ENCODE measurements at regions of chr20 and their contacts with region 1.

Region 1: DNA sequence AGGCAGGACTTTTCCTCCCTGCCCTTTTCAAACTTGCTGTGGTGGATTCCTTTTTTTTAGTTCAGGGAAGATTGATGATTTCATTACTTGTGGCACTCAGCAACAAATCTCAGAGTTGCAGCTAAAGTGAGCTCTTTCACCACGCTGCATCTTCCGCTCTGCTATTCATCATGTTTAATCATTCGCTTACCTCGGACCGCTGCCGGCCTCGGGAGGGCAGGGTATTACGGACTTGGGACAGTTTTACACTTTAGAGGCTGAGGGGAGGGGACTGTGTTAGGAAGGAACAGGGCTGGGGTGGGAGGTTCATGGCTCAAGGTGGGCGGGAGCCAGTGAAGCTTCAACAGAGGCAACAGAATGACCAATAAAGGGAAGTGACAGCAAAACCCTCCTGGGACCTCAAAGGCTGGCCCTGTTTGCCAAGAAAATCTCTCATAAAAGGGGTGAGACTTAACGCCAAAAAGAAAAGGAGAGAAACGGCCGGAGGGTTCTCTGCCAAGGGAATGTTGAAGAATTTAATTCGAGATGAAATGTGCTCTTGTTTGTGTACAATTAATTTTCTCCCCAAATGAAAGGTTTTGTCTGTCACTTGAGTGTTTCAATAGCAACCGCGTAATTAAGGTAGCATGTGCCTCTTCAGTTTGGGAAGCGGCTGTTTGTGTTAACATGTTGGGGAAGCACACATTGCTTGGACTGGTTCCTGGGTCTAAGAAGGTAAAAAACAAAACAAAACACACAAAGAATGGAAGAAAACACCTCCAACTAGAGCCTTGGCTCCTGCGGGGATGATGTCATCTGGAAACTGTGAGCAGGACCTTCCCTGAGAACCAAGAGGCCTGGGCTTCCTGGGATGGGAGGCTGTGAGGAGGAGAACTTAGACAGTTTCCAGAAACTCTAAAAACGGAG is 72.5 kb upstream of the SULF2 start:
- DNase-seq: peak; percentile 70 to 76
- H3K4me3 ChIP-seq: peak overlapping the region; percentile 46
- H3K27ac ChIP-seq: peak overlapping the region; percentile 99
- H3K4me1 ChIP-seq: peaks cover 56% of the 10 kb centered on the region
- H3K27me3 ChIP-seq: no peaks in the 10 kb centered on the region
- CTCF ChIP-seq: 0 out of 2 replicates have a peak, but pooled peaks have one; percentile 14

Region 2: DNA sequence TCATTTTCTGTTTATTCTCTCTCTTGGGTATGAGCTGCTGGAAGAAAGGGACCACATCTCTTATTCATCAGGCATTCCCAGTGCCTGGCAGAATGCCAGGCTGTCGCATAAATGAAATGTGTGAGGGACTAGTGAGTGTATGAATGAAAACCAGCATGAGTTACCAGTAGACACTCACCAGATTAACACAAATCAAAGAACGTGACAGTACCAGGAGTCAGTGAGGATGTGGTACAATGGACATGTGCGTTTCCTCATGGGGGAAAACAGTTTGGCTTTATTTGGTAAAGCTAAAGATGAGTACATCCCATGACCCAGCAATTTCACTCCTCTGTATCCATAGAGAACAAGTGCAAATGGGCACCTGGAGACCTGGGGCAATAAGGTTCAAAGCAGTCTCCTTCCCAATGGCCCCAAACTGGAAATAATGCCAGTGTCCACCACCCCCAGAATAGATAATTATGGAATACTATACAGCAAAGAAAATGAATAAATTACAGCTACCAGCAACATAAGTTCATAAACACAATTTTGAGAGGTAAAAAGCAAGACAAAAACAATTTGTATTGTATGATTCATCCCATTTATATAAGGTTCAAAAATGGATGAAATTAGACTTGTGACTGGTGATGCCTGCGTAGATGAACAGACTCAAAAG is 1642.9 kb before region 1 on chr20:
- CTCF ChIA-PET with region 1: no interaction called
- POLR2A ChIA-PET with region 1: no interaction called
- intact Hi-C with region 1: no loop called
- DNase-seq: no peak
- H3K4me3 ChIP-seq: no peak overlapping the region
- H3K27ac ChIP-seq: no peak overlapping the region
- H3K4me1 ChIP-seq: peaks cover 11% of the 10 kb centered on the region
- H3K27me3 ChIP-seq: peaks cover 46% of the 10 kb centered on the region
- CTCF ChIP-seq: no peak

Region 3: DNA sequence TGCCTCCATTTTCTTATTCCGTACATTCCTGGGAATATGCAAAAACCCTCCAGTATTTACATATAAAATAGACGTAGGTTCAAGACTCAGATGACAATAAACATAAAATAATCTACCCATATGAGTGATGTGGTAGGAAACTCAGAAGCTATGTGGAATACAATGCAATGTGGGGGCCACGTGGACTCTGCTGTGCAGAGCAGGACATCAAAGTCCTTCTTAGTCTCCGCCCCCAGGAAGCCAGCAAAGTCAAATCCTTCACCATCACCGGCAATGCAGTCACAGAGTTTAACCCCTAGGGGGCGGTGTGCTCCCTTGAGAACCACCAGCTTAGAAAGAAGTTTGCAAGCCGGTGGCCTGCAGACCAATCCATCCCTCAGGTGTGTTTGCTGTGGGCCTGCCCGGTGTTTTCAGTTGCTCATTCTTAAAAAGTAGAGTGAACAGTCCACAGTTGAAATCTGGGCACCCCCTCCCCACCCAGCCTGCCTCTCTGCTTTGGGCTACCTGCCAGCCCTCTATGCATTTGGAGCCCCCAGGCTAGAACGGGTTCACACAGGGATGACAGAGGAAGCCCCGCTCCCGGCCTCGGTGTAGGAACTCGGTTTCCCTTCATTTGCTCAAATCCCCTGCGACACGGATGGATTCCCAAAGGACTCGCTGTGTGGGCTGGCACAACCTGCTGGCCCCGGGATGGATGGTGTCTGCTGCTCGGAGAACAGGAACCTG is 132.4 kb before region 1 on chr20:
- CTCF ChIA-PET with region 1: no interaction called
- POLR2A ChIA-PET with region 1: no interaction called
- intact Hi-C with region 1: loop called (anchors 5 kb)
- DNase-seq: peak; percentile 84 to 86
- H3K4me3 ChIP-seq: no peak overlapping the region
- H3K27ac ChIP-seq: no peak overlapping the region
- H3K4me1 ChIP-seq: 0 out of 2 replicates have a peak, but pooled peaks cover 4% of the 10 kb centered on the region
- H3K27me3 ChIP-seq: no peaks in the 10 kb centered on the region
- CTCF ChIP-seq: peak; percentile 99

Region 4: GRCh38 chr20:47818996-47819609 is 38.7 kb before region 1 on chr20:
- CTCF ChIA-PET with region 1: interaction called, 3 read pairs
- POLR2A ChIA-PET with region 1: no interaction called
- intact Hi-C with region 1: loop called (anchors 5 kb)
- DNase-seq: no peak
- H3K4me3 ChIP-seq: no peak overlapping the region
- H3K27ac ChIP-seq: peak overlapping the region; percentile 88
- H3K4me1 ChIP-seq: peaks cover 76% of the 10 kb centered on the region
- H3K27me3 ChIP-seq: no peaks in the 10 kb centered on the region
- CTCF ChIP-seq: no peak

Region 5: GRCh38 chr20:47929363-47930123 is 71.7 kb after region 1 on chr20:
- CTCF ChIA-PET with region 1: no interaction called
- POLR2A ChIA-PET with region 1: interaction called, 12 read pairs
- intact Hi-C with region 1: no loop called
- DNase-seq: peak; percentile 50 to 88
- H3K4me3 ChIP-seq: no peak overlapping the region
- H3K27ac ChIP-seq: peak overlapping the region; percentile 96
- H3K4me1 ChIP-seq: peaks cover 68% of the 10 kb centered on the region
- H3K27me3 ChIP-seq: no peaks in the 10 kb centered on the region
- CTCF ChIP-seq: no peak

Region 6: DNA sequence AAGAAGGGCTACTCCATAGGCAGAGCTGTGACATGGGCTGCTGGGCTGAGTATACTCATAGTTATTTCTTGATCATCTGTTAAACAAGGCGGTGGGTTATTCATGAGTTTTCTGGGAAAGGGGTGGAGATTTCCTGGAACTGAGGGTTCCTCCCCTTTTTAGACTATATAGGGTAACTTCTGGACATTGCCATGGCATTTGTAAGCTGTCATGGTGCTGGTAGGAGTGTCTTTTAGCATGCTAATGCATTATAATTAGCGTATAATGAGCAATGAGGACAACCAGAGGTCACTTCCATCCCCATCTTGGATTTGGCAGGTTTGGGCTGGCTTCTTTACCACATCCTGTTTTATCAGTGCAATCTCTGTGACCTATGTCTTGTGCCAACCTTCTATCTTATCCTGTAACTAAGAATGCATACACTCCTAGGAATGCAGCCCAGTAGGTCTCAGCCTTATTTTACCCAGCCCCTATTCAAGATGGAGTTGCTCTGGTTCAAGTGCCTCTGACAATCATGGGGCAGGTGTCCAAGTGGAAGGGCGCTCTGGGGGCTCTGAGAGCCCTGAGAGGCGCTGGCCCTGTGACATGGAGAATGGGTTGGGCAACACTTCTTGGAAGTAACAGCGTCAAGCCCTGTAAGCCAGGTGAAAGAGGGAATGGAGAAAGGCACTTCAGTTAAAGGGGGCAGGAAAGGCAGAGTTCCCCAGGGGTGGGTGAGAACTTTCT is 281.6 kb after region 1 on chr20:
- CTCF ChIA-PET with region 1: no interaction called
- POLR2A ChIA-PET with region 1: no interaction called
- intact Hi-C with region 1: loop called (anchors 1 kb)
- DNase-seq: peak; percentile 79 to 88
- H3K4me3 ChIP-seq: no peak overlapping the region
- H3K27ac ChIP-seq: peak overlapping the region; percentile 45
- H3K4me1 ChIP-seq: peaks cover 23% of the 10 kb centered on the region
- H3K27me3 ChIP-seq: no peaks in the 10 kb centered on the region
- CTCF ChIP-seq: no peak

Measured in PC-9 (cell line).